OCI-LY7 (cell line): ENCODE measurements at regions of chr12 and their contacts with region 1.

Region 1: GRCh38 chr12:46071769-46072624 is 81.6 kb upstream of the SCAF11 start:
- DNase-seq: peak; percentile 84
- H3K4me3 ChIP-seq: no peak overlapping the region
- H3K27ac ChIP-seq: no peak overlapping the region
- H3K4me1 ChIP-seq: peaks cover 5% of the 10 kb centered on the region
- CTCF ChIP-seq: peak; percentile 98

Region 2: DNA sequence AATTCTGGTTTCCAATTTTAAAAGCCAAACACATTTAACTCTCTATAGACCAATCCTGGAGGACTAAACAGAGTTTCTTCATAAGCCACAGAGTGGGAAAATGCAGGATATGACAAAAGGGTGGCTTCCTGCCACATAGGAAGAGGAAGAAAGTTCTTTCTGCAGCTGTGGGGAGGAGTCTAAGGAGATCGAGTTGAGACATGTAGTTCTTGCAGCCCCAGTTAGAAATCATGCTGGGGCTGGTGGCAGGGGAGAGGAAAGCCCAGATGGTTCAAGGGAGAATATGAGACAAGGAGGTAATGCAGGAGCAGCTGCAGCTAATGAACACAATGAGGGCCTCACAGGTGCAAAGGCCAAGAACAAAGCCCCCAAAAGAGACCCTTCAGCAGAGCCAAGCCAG is 427.5 kb before region 1 on chr12:
- CTCF ChIA-PET with region 1: no interaction called
- POLR2A ChIA-PET with region 1: no interaction called
- intact Hi-C with region 1: no loop called
- DNase-seq: peak; percentile 13
- H3K4me3 ChIP-seq: no peak overlapping the region
- H3K27ac ChIP-seq: no peak overlapping the region
- H3K4me1 ChIP-seq: no peaks in the 10 kb centered on the region
- CTCF ChIP-seq: no peak

Region 3: GRCh38 chr12:46124848-46125619 is 53.0 kb after region 1 on chr12:
- CTCF ChIA-PET with region 1: interaction called, 5 read pairs
- POLR2A ChIA-PET with region 1: interaction called, 4 read pairs
- intact Hi-C with region 1: loop called (anchors 1 kb)
- DNase-seq: peak; percentile 84
- H3K4me3 ChIP-seq: no peak overlapping the region
- H3K27ac ChIP-seq: no peak overlapping the region
- H3K4me1 ChIP-seq: peaks cover 6% of the 10 kb centered on the region
- CTCF ChIP-seq: peak; percentile 81

Region 4: DNA sequence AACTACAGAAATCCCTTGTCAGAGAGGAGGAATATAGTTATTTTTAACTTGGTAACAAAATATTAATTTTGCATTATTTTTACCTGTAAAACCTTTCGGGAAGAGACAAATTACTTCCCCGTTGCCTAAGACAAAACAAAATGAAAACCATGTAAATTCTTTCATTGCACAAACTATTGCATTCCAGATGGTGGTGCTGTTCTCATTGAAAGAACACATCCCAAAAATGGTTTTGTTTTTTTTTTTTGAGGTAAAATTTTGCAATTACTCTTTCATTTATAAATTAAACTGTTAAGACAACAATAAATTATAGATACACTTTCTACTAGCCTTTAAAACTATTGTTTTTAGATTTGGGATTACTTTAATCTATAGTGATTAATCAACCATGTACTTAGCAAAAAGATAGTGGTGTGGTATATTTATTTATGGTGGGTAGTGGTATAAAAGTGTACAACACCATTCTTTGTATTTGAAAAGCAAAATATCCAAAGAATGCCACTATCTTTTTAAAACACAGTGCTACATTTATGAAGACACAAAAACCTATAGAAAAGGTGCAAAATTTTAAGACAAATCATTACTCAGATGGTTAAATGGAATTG is 81.4 kb after region 1 on chr12:
- CTCF ChIA-PET with region 1: no interaction called
- POLR2A ChIA-PET with region 1: no interaction called
- intact Hi-C with region 1: loop called (anchors 2 kb)
- DNase-seq: peak; percentile 55
- H3K4me3 ChIP-seq: no peak overlapping the region
- H3K27ac ChIP-seq: no peak overlapping the region
- H3K4me1 ChIP-seq: peaks cover 11% of the 10 kb centered on the region
- CTCF ChIP-seq: peak; percentile 95

Region 5: DNA sequence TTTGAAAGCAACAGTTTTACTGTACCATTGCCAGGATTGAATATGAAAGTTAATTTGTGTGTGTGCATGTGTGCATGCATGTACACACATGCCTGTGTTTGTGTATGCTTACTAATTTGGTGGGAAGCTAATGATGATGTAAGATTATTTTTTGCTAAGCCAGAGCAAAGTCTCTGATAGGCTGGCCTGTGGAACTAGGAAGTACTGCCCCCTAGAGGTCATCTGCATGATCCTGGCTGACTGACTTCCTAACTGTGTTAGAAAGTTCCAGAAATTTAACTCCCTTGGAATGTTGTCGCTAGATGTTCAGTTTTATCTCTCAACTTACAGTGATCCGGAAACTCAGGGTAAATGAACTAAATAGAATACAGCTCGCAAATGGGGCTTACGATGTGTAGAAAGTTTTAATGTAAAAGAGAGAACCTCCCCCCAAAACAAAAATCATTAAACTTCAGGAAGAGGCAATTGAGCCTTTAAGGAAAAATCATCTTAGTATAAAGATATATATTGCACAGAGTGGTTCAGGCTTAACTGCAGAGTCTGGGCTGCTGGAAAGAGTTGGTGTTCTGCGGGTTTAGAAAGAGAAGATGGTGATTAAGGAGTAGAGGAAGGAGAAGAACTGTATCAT is 231.2 kb after region 1 on chr12:
- CTCF ChIA-PET with region 1: no interaction called
- POLR2A ChIA-PET with region 1: no interaction called
- intact Hi-C with region 1: loop called (anchors 2 kb)
- DNase-seq: peak; percentile 60
- H3K4me3 ChIP-seq: no peak overlapping the region
- H3K27ac ChIP-seq: no peak overlapping the region
- H3K4me1 ChIP-seq: peaks cover 21% of the 10 kb centered on the region
- CTCF ChIP-seq: peak; percentile 92

Region 6: DNA sequence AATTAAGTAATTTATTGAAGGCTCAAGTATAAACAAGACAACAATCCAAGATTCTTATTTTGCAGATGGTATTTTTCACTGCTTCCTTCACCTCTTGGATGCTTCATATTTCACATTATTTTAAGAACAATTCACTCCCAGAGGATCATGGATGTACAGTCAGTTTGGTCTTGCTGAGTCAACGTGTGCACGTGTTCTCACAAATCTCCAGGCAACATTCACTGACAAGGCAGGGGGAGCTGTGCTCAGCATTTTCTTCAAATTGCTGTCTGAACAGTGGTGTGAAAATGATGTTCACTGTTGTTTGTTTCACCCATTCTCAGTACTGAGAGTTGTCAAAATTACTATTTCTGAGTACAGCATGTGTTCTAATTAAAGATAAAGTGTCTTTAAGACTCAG is 872.1 kb after region 1 on chr12:
- CTCF ChIA-PET with region 1: no interaction called
- POLR2A ChIA-PET with region 1: no interaction called
- intact Hi-C with region 1: no loop called
- DNase-seq: no peak
- H3K4me3 ChIP-seq: no peak overlapping the region
- H3K27ac ChIP-seq: no peak overlapping the region
- H3K4me1 ChIP-seq: no peaks in the 10 kb centered on the region
- CTCF ChIP-seq: no peak

Region 7: DNA sequence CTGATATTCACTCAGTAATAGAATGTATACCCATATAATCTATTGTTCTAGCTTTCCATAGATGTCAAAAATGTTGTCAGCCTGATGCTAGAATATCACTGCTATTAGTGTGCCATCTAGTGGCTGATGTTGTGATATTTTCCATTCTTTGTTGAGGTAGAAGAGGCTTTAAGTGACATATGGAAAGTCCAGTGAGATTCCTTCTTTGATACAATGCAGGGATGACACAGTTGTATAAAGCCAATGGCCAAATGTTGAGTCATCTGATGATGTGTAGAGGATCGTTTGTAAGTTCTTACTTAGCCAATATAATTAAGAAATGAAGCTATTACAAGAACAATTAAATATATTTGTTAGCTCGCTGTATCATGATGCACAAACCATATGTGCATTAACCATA is 949.3 kb after region 1 on chr12:
- CTCF ChIA-PET with region 1: no interaction called
- POLR2A ChIA-PET with region 1: no interaction called
- intact Hi-C with region 1: loop called (anchors 10 kb)
- DNase-seq: peak; percentile 56
- H3K4me3 ChIP-seq: no peak overlapping the region
- H3K27ac ChIP-seq: no peak overlapping the region
- H3K4me1 ChIP-seq: no peaks in the 10 kb centered on the region
- CTCF ChIP-seq: peak; percentile 94